Dorsolateral prefrontal cortex (tissue), 120 donors: ENCODE measurements at regions of chr16 and their contacts with region 1.

Region 1: DNA sequence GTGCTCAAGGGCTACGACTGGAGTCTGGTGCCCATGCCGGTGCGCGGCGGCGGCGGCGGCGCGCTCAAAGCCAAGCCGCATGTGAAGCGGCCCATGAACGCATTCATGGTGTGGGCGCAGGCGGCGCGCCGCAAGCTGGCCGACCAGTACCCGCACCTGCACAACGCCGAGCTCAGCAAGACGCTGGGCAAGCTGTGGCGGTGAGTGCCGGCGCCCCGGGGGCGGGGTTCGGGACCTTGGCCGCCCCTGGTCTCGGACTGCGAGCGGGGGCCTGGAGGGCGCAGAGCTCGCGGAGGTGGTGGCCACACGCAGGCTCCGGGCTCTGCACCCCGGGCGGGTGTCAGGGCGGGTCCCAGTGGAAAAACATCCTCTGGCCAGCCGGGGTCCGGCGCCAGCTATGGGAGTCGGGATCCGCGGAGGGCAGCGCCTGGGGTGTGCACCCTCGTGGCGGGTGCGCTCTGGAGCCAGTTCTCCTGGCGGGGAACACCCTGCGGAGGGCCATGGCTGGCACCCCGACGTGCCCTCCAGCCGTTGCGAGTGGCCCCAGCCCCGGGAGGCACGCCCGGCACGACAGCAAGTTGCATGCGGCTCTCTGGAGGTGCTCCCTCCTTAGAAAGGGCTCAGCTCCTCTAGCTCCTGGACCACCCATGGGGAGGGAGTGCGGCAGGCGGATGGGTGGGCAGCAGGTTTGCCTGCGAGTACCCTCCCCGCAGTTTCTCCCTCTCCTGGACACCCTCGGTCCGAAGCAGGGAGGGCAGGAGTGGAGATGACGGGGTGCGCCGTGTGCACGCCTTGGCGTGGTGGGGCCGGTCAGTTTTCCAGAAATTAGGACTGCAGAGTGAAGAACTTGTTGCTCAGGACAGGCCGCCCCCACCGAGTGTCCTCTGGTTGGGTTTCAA is 824 bp downstream of the SOX8 start:
- DNase-seq: no peak
- H3K4me3 ChIP-seq: peak overlapping the region; percentile 55 to 88 (median 74)
- H3K27ac ChIP-seq: peak overlapping the region; percentile 33 to 99 (median 84)
- H3K27me3 ChIP-seq: peaks cover 0 to 22% (median 0%) of the 10 kb centered on the region in 45 donors
- CTCF ChIP-seq: peak in 3 of 56 donors; percentile 4 to 10 (median 5)

Region 2: DNA sequence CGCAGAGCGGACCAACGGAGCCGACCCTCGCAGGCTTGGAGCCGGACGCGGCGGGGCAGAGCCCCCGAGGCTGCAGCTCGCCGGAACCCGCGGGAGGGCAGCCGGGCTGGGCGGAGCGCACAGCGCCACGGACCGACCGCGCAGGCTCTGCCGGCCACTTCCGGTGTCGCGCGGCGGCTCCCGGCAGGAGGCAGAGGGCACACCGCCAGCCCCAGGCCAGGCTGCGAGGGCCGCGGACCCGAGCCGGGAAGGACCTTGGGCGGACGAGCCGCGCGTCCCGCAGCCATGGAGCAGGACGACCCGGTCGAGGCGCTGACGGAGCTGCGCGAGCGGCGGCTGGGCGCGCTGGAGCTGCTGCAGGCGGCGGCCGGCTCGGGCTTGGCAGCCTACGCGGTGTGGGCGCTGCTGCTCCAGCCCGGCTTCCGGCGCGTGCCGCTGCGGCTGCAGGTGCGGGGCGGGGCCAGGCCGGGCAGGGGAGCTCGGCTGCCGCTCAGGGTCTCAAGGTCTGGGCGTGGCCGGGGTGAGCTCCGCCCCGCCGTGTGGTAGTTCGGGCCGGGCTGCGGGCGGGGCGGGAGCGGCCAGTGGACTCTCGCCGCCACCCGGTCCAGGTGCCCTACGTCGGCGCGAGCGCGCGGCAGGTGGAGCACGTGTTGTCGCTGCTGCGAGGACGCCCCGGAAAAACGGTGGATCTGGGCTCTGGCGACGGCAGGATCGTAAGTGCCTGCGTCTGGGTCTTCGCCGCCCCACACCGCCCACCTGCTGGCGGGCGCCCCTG is 261.2 kb before region 1 on chr16 and contains the start of gene ANTKMT:
- intact Hi-C with region 1: loop called in 1 of 2 experiments (anchors 10 kb)
- DNase-seq: peak in 6 of 10 donors; percentile 63 to 90 (median 76)
- H3K4me3 ChIP-seq: peak within 1 kb of the TSS; percentile 67 to 99 (median 82)
- H3K27ac ChIP-seq: peak within 1 kb of the TSS; percentile 78 to 99 (median 96)
- H3K27me3 ChIP-seq: no peaks in the 10 kb centered on the region
- CTCF ChIP-seq: peak in 32 of 56 donors; percentile 4 to 61 (median 33)
- total RNA-seq, gene ANTKMT: 38.5 to 95.7 (median 64.7) TPM

Region 3: GRCh38 chr16:822174-822908 is 160.1 kb before region 1 on chr16:
- intact Hi-C with region 1: no loop called
- DNase-seq: no peak
- H3K4me3 ChIP-seq: no peak overlapping the region
- H3K27ac ChIP-seq: no peak overlapping the region
- H3K27me3 ChIP-seq: peaks cover 0 to 35% (median 6%) of the 10 kb centered on the region in 45 donors
- CTCF ChIP-seq: no peak

Region 4: GRCh38 chr16:914440-914839 is 68.0 kb before region 1 on chr16:
- intact Hi-C with region 1: loop called (anchors 2 kb)
- DNase-seq: no peak
- H3K4me3 ChIP-seq: no peak overlapping the region
- H3K27ac ChIP-seq: peak overlapping the region in 58 of 59 donors; percentile 85 to 100 (median 98)
- H3K27me3 ChIP-seq: no peaks in the 10 kb centered on the region
- CTCF ChIP-seq: no peak

Region 5: GRCh38 chr16:1048442-1049112 is 66.2 kb after region 1 on chr16:
- intact Hi-C with region 1: loop called (anchors 1 to 2 kb)
- DNase-seq: peak in 9 of 10 donors; percentile 73 to 88 (median 83)
- H3K4me3 ChIP-seq: peak overlapping the region in 5 of 59 donors; percentile 3 to 30 (median 8)
- H3K27ac ChIP-seq: peak overlapping the region; percentile 68 to 99 (median 94)
- H3K27me3 ChIP-seq: peaks cover 0 to 3% (median 0%) of the 10 kb centered on the region in 45 donors
- CTCF ChIP-seq: peak in 1 of 56 donors; percentile 10

Region 6: GRCh38 chr16:1054660-1055556 is 72.5 kb after region 1 on chr16:
- intact Hi-C with region 1: loop called in 1 of 2 experiments (anchors 2 kb)
- DNase-seq: peak; percentile 59 to 85 (median 78)
- H3K4me3 ChIP-seq: no peak overlapping the region
- H3K27ac ChIP-seq: peak overlapping the region in 31 of 59 donors; percentile 2 to 77 (median 51)
- H3K27me3 ChIP-seq: peaks cover 0 to 9% (median 0%) of the 10 kb centered on the region in 45 donors
- CTCF ChIP-seq: peak; percentile 63 to 98 (median 92)